CD8-positive, alpha-beta T cell (primary cell): ENCODE measurements at regions of chr1 and their contacts with region 1.

Region 1: GRCh38 chr1:167687919-167688519 is 33.8 kb upstream of the MPZL1 start:
- DNase-seq: peak; percentile 62 to 85 (median 82)
- ATAC-seq: peak; percentile 95
- H3K4me3 ChIP-seq: no peak overlapping the region
- H3K4me3 Mint-ChIP-seq: no peak overlapping the region
- H3K27ac ChIP-seq: no peak overlapping the region
- H3K27ac Mint-ChIP-seq: peak overlapping the region; percentile 67
- H3K4me1 ChIP-seq: peaks cover 5% of the 10 kb centered on the region
- H3K4me1 Mint-ChIP-seq: peaks cover 18% of the 10 kb centered on the region
- H3K27me3 ChIP-seq: no peaks in the 10 kb centered on the region
- H3K27me3 Mint-ChIP-seq: no peaks in the 10 kb centered on the region
- CTCF ChIP-seq: peak; percentile 99

Region 2: GRCh38 chr1:166721145-166721544 is 966.9 kb before region 1 on chr1:
- CTCF ChIA-PET with region 1: no interaction called
- POLR2A ChIA-PET with region 1: no interaction called
- intact Hi-C with region 1: no loop called
- DNase-seq: no peak
- ATAC-seq: no peak
- H3K4me3 ChIP-seq: no peak overlapping the region
- H3K4me3 Mint-ChIP-seq: no peak overlapping the region
- H3K27ac ChIP-seq: no peak overlapping the region
- H3K27ac Mint-ChIP-seq: no peak overlapping the region
- H3K4me1 ChIP-seq: no peaks in the 10 kb centered on the region
- H3K4me1 Mint-ChIP-seq: no peaks in the 10 kb centered on the region
- H3K27me3 ChIP-seq: no peaks in the 10 kb centered on the region
- H3K27me3 Mint-ChIP-seq: peaks cover 4% of the 10 kb centered on the region
- CTCF ChIP-seq: no peak

Region 3: DNA sequence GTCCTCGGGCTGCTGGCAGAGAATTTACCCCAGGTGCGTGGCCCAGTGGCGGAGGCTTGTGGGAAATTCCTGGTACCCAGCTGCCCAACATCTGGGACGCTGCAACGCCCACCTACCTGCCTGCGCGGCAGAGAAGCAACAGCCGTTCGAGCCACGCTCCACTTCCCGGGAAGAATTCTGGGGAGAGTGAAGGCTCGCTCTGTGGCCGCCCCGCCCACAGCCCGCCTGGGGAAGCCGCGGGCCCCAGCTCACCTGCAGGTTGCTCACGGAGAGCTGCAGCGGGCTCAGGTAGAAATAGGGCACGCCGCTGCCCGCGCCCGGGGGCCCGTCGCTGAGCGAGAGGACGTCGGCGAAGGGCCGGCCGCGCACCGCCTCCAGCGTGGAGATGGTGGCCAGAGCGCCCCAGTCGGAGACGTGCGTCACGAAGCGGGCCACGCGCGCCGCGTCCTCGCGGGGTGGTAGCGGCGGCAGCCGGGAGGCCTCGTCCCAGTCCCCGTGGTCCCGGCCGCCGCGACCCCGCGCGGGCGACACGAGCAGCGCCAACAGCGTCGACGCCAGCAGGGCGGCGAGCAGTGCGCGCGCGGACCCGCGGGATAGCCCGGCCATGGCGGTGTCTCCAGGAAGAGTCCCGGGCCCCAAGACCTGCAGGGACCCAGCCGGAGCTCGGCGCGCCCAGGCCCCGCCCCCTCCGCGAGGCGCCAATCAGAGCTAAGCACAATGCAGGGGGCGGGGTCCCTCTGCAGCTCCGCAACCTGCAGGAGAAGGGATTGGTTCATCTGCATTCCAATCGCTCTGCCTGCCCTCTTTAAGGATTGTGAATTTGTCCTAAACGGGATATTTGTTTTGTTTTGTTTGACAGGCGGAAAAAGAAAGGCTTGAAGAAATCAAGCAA is 134.6 kb before region 1 on chr1 and contains the start of gene CREG1:
- CTCF ChIA-PET with region 1: interaction called, 17 read pairs
- POLR2A ChIA-PET with region 1: no interaction called
- intact Hi-C with region 1: loop called (anchors 2 to 5 kb)
- DNase-seq: peak; percentile 70 to 93 (median 88)
- ATAC-seq: peak; percentile 97
- H3K4me3 ChIP-seq: peak within 1 kb of the TSS; percentile 62 to 70
- H3K4me3 Mint-ChIP-seq: peak within 1 kb of the TSS; percentile 88
- H3K27ac ChIP-seq: peak within 1 kb of the TSS in 1 of 2 experiments; percentile 57
- H3K27ac Mint-ChIP-seq: no peak within 1 kb of the TSS
- H3K4me1 ChIP-seq: peaks cover 18% of the 10 kb centered on the region
- H3K4me1 Mint-ChIP-seq: peaks cover 47% of the 10 kb centered on the region
- H3K27me3 ChIP-seq: no peaks in the 10 kb centered on the region
- H3K27me3 Mint-ChIP-seq: no peaks in the 10 kb centered on the region
- CTCF ChIP-seq: no peak
- total RNA-seq, gene CREG1: 9.3 to 9.8 TPM

Region 4: DNA sequence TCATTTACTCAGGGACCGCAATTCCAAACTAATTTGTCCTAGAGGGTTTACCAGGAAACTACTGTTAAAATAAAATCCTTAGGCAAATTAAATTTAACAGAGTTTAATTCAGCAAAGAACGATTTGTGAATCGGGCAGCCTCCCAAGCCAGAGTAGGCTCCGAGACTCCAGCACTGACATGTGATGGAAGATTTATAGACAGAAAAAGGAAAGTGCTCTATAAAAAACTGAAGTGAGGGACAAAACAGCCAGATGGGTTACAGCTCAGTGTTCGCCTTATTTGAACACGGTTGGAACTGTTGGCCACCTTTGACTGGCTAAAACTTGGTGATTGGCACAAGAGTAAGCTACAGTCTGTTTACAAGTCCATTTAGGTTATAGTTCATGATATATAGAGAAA is 93.2 kb before region 1 on chr1:
- CTCF ChIA-PET with region 1: interaction called, 186 read pairs
- POLR2A ChIA-PET with region 1: interaction called, 22 read pairs
- intact Hi-C with region 1: loop called (anchors 1 kb)
- DNase-seq: no peak
- ATAC-seq: no peak
- H3K4me3 ChIP-seq: no peak overlapping the region
- H3K4me3 Mint-ChIP-seq: no peak overlapping the region
- H3K27ac ChIP-seq: no peak overlapping the region
- H3K27ac Mint-ChIP-seq: no peak overlapping the region
- H3K4me1 ChIP-seq: peaks cover 1% of the 10 kb centered on the region
- H3K4me1 Mint-ChIP-seq: peaks cover 4% of the 10 kb centered on the region
- H3K27me3 ChIP-seq: no peaks in the 10 kb centered on the region
- H3K27me3 Mint-ChIP-seq: no peaks in the 10 kb centered on the region
- CTCF ChIP-seq: no peak

Region 5: GRCh38 chr1:167617153-167618147 is 70.6 kb before region 1 on chr1:
- CTCF ChIA-PET with region 1: interaction called, 16 read pairs
- POLR2A ChIA-PET with region 1: no interaction called
- intact Hi-C with region 1: no loop called
- DNase-seq: peak in 4 of 9 experiments; percentile 31 to 68 (median 46)
- ATAC-seq: peak; percentile 49
- H3K4me3 ChIP-seq: peak overlapping the region in 1 of 2 experiments; percentile 6
- H3K4me3 Mint-ChIP-seq: peak overlapping the region; percentile 60
- H3K27ac ChIP-seq: peak overlapping the region; percentile 9 to 59
- H3K27ac Mint-ChIP-seq: peak overlapping the region; percentile 92
- H3K4me1 ChIP-seq: peaks cover 39% of the 10 kb centered on the region
- H3K4me1 Mint-ChIP-seq: peaks cover 59% of the 10 kb centered on the region
- H3K27me3 ChIP-seq: no peaks in the 10 kb centered on the region
- H3K27me3 Mint-ChIP-seq: no peaks in the 10 kb centered on the region
- CTCF ChIP-seq: no peak

Region 6: GRCh38 chr1:167641786-167642500 is 46.1 kb before region 1 on chr1:
- CTCF ChIA-PET with region 1: interaction called, 29 read pairs
- POLR2A ChIA-PET with region 1: interaction called, 4 read pairs
- intact Hi-C with region 1: loop called (anchors 1 kb)
- DNase-seq: peak in 3 of 9 experiments; percentile 42 to 59 (median 51)
- ATAC-seq: peak; percentile 50
- H3K4me3 ChIP-seq: no peak overlapping the region
- H3K4me3 Mint-ChIP-seq: peak overlapping the region; percentile 62
- H3K27ac ChIP-seq: peak overlapping the region in 1 of 2 experiments; percentile 46
- H3K27ac Mint-ChIP-seq: peak overlapping the region; percentile 84
- H3K4me1 ChIP-seq: peaks cover 83% of the 10 kb centered on the region
- H3K4me1 Mint-ChIP-seq: peaks cover 96% of the 10 kb centered on the region
- H3K27me3 ChIP-seq: no peaks in the 10 kb centered on the region
- H3K27me3 Mint-ChIP-seq: no peaks in the 10 kb centered on the region
- CTCF ChIP-seq: no peak

Region 7: GRCh38 chr1:167676205-167676915 is 11.7 kb before region 1 on chr1:
- CTCF ChIA-PET with region 1: interaction called, 18 read pairs
- POLR2A ChIA-PET with region 1: no interaction called
- intact Hi-C with region 1: loop called in 1 of 2 experiments (anchors 1 kb)
- DNase-seq: no peak
- ATAC-seq: no peak
- H3K4me3 ChIP-seq: no peak overlapping the region
- H3K4me3 Mint-ChIP-seq: no peak overlapping the region
- H3K27ac ChIP-seq: peak overlapping the region in 1 of 2 experiments; percentile 41
- H3K27ac Mint-ChIP-seq: no peak overlapping the region
- H3K4me1 ChIP-seq: peaks cover 46% of the 10 kb centered on the region
- H3K4me1 Mint-ChIP-seq: peaks cover 55% of the 10 kb centered on the region
- H3K27me3 ChIP-seq: no peaks in the 10 kb centered on the region
- H3K27me3 Mint-ChIP-seq: no peaks in the 10 kb centered on the region
- CTCF ChIP-seq: no peak